Aorta (tissue), 5 donors: ENCODE measurements at regions of chr16 and their contacts with region 1.

Region 1: GRCh38 chr16:58755989-58756649 is 22.0 kb upstream of the GOT2 start:
- DNase-seq: peak; percentile 76 to 86
- ATAC-seq: peak; percentile 84
- H3K4me3 ChIP-seq: no peak overlapping the region
- H3K27ac ChIP-seq: no peak overlapping the region
- H3K4me1 ChIP-seq: no peaks in the 10 kb centered on the region
- H3K27me3 ChIP-seq: no peaks in the 10 kb centered on the region

Region 2: GRCh38 chr16:58678716-58679115 is 77.4 kb before region 1 on chr16:
- intact Hi-C with region 1: loop called (anchors 2 to 5 kb)
- DNase-seq: peak; percentile 57 to 82
- ATAC-seq: no peak
- H3K4me3 ChIP-seq: no peak overlapping the region
- H3K27ac ChIP-seq: no peak overlapping the region
- H3K4me1 ChIP-seq: no peaks in the 10 kb centered on the region
- H3K27me3 ChIP-seq: no peaks in the 10 kb centered on the region